A673 (cell line): ENCODE measurements at regions of chr9 and their contacts with region 1.

Region 1: DNA sequence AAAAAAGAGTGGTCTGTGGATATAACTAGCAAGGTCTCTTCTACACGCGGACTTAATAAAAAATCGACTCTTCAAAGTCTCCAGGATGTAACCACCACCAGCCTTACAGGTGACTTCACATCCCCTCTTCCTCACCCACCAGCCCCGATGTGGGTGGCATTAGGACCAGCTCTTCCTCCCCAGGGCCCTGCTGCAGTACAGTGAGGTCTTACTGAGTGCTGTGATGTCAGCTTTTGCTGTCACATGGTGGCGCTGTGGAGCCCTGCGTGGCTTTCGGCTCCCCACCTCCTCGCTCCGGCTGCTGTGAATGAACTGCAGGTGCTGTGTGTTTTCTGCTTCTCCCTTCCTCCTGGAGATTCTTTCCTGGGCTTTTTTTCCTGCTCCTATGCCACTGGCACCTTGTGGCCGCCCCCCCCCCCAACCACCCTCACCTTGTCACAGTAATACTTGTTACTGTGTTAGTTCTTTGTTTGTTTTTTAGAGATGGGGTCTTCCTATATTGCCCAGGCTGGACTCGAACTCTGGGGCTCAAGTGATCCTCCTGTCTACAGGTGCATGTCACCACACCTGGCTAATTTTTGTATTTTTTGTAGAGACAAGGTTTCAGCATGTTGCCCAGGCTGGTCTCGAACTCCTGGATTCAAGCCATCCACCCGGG is 15.8 kb upstream of the RAPGEF1 start:
- DNase-seq: peak; percentile 90
- H3K4me3 ChIP-seq: no peak overlapping the region
- H3K27ac ChIP-seq: no peak overlapping the region
- H3K4me1 ChIP-seq: no peaks in the 10 kb centered on the region
- H3K27me3 ChIP-seq: peaks cover 20% of the 10 kb centered on the region
- CTCF ChIP-seq: peak; percentile 90

Region 2: DNA sequence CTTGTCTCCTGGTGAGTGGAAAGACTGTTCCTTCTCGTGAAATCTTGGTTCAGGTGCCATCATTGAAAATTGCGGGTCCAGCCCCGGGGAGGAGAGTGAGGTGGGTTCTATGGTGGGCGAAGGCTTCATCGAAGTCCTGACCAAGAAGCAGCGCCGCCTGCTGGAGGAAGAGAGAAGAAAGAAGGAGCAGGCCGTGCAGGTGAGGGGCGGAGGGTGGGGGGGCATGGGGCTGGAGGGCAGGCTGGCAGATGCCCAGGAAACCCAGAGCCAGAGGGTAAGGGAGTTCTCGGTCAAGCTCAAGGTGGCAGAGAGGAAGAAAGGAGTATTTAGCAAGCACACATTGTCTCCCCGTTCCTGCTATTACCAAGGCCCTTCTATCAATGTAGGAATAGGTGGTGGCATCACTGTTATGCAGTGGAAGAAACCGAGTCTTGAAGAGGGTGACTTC is 277.2 kb before region 1 on chr9:
- CTCF ChIA-PET with region 1: no interaction called
- POLR2A ChIA-PET with region 1: no interaction called
- intact Hi-C with region 1: no loop called
- DNase-seq: peak; percentile 66
- H3K4me3 ChIP-seq: no peak overlapping the region
- H3K27ac ChIP-seq: no peak overlapping the region
- H3K4me1 ChIP-seq: no peaks in the 10 kb centered on the region
- H3K27me3 ChIP-seq: no peaks in the 10 kb centered on the region
- CTCF ChIP-seq: peak; percentile 74

Region 3: GRCh38 chr9:132424857-132425686 is 669.4 kb after region 1 on chr9:
- CTCF ChIA-PET with region 1: no interaction called
- POLR2A ChIA-PET with region 1: no interaction called
- intact Hi-C with region 1: no loop called
- DNase-seq: no peak
- H3K4me3 ChIP-seq: no peak overlapping the region
- H3K27ac ChIP-seq: no peak overlapping the region
- H3K4me1 ChIP-seq: no peaks in the 10 kb centered on the region
- H3K27me3 ChIP-seq: peaks cover 56% of the 10 kb centered on the region
- CTCF ChIP-seq: no peak

Region 4: GRCh38 chr9:132486706-132487350 is 731.2 kb after region 1 on chr9:
- CTCF ChIA-PET with region 1: interaction called, 10 read pairs
- POLR2A ChIA-PET with region 1: no interaction called
- intact Hi-C with region 1: no loop called
- DNase-seq: no peak
- H3K4me3 ChIP-seq: no peak overlapping the region
- H3K27ac ChIP-seq: no peak overlapping the region
- H3K4me1 ChIP-seq: no peaks in the 10 kb centered on the region
- H3K27me3 ChIP-seq: peaks cover 78% of the 10 kb centered on the region
- CTCF ChIP-seq: no peak